ENCODE measurements at regions of chr17 and their contacts with region 1.

Region 1: GRCh38 chr17:21034340-21035235 is 8.2 kb downstream of the USP22 start:
- DNase-seq: no peak
- H3K4me3 ChIP-seq: peak overlapping the region; percentile 27
- H3K27ac ChIP-seq: no peak overlapping the region
- H3K27me3 ChIP-seq: no peaks in the 10 kb centered on the region
- CTCF ChIP-seq: no peak

Region 2: GRCh38 chr17:20284570-20285295 is 749.9 kb before region 1 on chr17:
- CTCF ChIA-PET with region 1: no interaction called
- POLR2A ChIA-PET with region 1: no interaction called
- DNase-seq: peak; percentile 52
- H3K4me3 ChIP-seq: no peak overlapping the region
- H3K27ac ChIP-seq: peak overlapping the region; percentile 85
- H3K27me3 ChIP-seq: no peaks in the 10 kb centered on the region
- CTCF ChIP-seq: no peak

Region 3: GRCh38 chr17:21058098-21058893 is 23.7 kb after region 1 on chr17:
- CTCF ChIA-PET with region 1: interaction called, 4 read pairs
- POLR2A ChIA-PET with region 1: interaction called, 11 read pairs
- DNase-seq: no peak
- H3K4me3 ChIP-seq: no peak overlapping the region
- H3K27ac ChIP-seq: no peak overlapping the region
- H3K27me3 ChIP-seq: peaks cover 13% of the 10 kb centered on the region
- CTCF ChIP-seq: peak; percentile 40

Region 4: DNA sequence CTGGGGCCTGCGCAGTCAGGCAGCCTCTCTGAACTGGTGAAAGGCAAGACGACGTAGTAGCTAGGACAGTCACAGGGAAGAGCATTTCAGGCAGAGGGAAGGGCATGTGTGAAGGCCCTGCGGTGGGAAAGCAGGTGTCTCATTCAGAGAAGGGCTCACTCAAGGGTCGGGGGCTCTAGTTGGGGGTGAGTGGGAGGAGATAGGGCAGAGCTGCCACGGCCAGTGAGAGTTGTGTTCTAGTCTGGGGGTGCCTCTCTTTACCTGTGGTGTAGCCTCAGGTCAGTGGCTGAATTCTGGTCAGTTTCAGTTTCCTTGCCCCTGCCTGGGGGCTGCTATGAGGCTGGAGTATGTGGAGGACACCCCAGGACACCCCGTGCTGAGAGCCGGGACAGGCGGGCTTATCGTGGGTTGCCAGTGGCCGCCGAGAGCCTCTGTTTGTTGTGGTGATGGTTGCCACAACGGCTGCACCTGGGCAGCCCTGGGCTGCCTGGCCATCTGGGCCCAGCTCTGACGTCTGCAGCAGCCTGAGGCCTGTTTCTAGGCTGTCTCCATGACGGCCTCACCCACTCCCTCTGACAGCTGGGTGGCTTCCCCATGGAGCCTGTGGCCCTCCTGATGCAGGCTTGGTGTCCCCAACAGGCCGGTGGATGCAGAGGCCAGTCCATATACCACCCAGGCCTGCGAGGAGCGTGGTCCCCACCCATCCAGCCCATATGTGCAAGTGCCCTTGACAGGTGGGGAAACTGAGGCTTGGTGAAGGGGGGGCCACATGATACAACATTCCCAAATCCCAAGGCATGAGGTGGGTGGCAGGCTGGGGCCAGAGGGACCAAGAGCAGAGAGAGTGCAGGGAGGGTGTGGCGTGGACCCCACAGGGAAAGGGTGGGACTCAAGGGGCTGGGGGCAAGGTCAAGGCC is 260.7 kb after region 1 on chr17:
- CTCF ChIA-PET with region 1: no interaction called
- POLR2A ChIA-PET with region 1: no interaction called
- DNase-seq: no peak
- H3K4me3 ChIP-seq: no peak overlapping the region
- H3K27ac ChIP-seq: no peak overlapping the region
- H3K27me3 ChIP-seq: no peaks in the 10 kb centered on the region
- CTCF ChIP-seq: no peak